Ascending aorta (tissue), 2 donors: ENCODE measurements at regions of chr1 and their contacts with region 1.

Region 1: GRCh38 chr1:29235955-29236684 is at the start of gene PTPRU:
- DNase-seq: peak in 1 of 2 donors; percentile 83
- H3K4me3 ChIP-seq: peak within 1 kb of the TSS; percentile 80 to 98
- H3K27ac ChIP-seq: peak within 1 kb of the TSS; percentile 60 to 79
- H3K4me1 ChIP-seq: peaks cover 6 to 18% of the 10 kb centered on the region in 2 donors
- H3K27me3 ChIP-seq: no peaks in the 10 kb centered on the region
- CTCF ChIP-seq: peak; percentile 37 to 99 (median 60)
- total RNA-seq, gene PTPRU: 32.7 TPM

Region 2: GRCh38 chr1:29180497-29181412 is 55.4 kb before region 1 on chr1:
- intact Hi-C with region 1: no loop called
- DNase-seq: no peak
- H3K4me3 ChIP-seq: peak overlapping the region; percentile 95 to 99
- H3K27ac ChIP-seq: peak overlapping the region; percentile 100
- H3K4me1 ChIP-seq: peaks cover 18 to 32% of the 10 kb centered on the region in 2 donors
- H3K27me3 ChIP-seq: no peaks in the 10 kb centered on the region
- CTCF ChIP-seq: no peak

Region 3: DNA sequence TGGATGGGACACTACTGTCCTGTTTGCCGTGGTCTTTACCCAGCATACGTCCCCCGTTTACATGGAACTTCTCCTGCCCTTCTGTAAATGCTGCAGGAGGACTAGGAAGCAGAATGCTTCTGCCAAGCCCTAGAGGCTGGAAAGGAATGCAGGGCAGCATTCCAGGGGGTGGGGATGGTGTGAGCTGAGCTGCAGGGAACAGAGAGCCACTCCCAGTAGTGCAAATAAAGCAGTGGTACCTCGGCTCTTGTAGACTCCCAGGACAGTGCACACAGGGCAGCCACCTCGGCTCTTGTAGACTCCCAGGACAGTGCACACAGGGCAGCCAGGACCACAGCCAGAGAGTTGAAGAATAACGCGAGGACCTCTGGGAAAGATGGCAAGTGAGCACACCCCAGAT is 35.6 kb after region 1 on chr1:
- intact Hi-C with region 1: no loop called
- DNase-seq: no peak
- H3K4me3 ChIP-seq: no peak overlapping the region
- H3K27ac ChIP-seq: no peak overlapping the region
- H3K4me1 ChIP-seq: peaks cover 0 to 10% of the 10 kb centered on the region in 2 donors
- H3K27me3 ChIP-seq: no peaks in the 10 kb centered on the region
- CTCF ChIP-seq: no peak

Region 4: DNA sequence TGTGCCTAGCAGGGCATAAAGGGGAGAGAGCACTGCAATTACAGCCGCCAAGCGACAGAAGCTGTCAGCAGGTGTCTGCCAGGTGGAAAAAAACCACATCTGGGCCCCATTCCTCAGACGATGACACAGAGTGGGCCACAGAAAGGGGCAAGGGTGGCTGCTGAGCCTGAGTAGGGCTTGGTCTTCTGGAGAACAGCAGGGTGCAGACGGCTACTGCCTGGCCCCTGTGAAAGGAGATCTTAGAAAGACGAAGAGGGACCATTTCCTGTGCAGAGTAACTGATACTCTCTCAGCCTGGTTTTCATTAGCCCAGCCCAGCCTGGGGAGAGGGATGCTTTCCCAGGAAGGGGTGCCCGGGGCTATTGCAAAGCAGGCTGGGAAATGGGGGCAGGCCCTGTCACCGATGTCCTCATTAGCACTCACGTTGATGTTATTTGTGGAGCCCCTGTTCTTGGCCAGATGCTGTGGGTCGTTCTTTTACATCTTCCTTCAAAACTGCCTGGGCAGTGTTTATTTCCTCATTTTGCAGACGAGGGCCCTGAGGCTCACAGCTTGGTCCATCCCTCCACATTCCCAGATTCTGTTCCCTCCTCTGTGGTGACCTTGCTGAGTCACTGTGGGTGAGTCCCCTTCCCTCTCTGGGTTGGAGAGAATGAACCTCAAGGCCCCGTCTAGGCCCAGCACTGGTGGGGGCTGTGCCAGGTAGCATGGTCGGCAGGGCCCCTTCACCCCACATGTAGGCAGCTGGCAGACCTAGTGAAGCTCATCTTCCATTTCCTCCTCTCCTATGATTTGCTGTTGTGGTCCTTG is 473.0 kb after region 1 on chr1:
- intact Hi-C with region 1: loop called (anchors 2 kb)
- DNase-seq: no peak
- H3K4me3 ChIP-seq: no peak overlapping the region
- H3K27ac ChIP-seq: peak overlapping the region; percentile 87
- H3K4me1 ChIP-seq: peaks cover 22 to 33% of the 10 kb centered on the region in 2 donors
- H3K27me3 ChIP-seq: no peaks in the 10 kb centered on the region
- CTCF ChIP-seq: no peak

Region 5: GRCh38 chr1:30085811-30086770 is 850.0 kb after region 1 on chr1:
- intact Hi-C with region 1: loop called (anchors 1 kb)
- DNase-seq: peak in 1 of 2 donors; percentile 86
- H3K4me3 ChIP-seq: peak overlapping the region; percentile 28 to 61
- H3K27ac ChIP-seq: peak overlapping the region; percentile 96 to 98
- H3K4me1 ChIP-seq: peaks cover 10 to 28% of the 10 kb centered on the region in 2 donors
- H3K27me3 ChIP-seq: no peaks in the 10 kb centered on the region
- CTCF ChIP-seq: peak; percentile 83 to 99 (median 96)

Region 6: DNA sequence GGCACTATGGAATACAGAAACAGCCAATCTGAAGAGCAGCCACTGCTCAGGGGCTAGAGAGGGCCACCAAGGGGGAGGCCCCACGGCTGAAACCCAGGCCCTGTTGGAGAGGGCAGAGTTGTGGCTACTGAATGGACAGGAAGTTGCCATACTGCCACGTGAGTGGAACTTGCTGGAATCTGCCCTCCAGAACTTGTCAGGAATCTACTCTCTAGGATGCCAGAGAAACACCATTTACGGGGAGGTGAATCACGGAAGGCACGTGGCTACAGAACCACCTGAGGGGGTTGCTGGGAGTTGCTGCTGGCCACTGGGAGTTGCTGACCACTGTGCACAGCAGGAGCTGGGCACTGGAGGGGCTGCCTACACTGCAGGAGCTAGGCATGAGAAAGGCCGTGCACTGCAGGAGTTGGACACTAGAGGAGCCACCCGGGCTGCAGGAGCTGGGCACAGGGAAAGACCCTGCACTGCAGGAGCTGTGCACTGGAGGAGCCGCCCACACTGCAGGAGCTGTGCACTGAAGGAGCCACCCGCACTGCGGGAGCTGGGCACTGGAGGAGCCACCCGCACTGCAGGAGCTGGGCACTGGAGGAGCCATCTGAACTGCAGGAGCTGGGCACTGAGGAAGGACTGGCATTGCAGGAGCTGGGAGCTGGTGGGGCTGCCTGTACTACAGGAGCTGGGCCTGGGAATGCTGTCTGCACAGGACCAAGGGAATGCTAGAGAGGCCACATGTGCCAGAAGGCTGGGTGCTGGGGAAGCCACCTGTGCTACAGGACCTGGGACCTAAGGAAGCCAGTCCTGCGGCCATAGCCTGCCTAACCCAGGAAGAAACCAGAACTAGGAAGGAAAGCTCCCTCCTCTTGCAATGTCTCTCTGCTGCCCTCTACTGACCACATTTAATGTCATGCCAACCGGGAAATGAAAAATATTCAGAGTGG is 1143.8 kb after region 1 on chr1:
- intact Hi-C with region 1: loop called (anchors 1 kb)
- DNase-seq: peak in 1 of 2 donors; percentile 75
- H3K4me3 ChIP-seq: no peak overlapping the region
- H3K27ac ChIP-seq: no peak overlapping the region
- H3K4me1 ChIP-seq: no peaks in the 10 kb centered on the region
- H3K27me3 ChIP-seq: no peaks in the 10 kb centered on the region
- CTCF ChIP-seq: peak; percentile 53 to 79 (median 73)